ENCODE measurements at regions of chr22 and their contacts with region 1.

Region 1: DNA sequence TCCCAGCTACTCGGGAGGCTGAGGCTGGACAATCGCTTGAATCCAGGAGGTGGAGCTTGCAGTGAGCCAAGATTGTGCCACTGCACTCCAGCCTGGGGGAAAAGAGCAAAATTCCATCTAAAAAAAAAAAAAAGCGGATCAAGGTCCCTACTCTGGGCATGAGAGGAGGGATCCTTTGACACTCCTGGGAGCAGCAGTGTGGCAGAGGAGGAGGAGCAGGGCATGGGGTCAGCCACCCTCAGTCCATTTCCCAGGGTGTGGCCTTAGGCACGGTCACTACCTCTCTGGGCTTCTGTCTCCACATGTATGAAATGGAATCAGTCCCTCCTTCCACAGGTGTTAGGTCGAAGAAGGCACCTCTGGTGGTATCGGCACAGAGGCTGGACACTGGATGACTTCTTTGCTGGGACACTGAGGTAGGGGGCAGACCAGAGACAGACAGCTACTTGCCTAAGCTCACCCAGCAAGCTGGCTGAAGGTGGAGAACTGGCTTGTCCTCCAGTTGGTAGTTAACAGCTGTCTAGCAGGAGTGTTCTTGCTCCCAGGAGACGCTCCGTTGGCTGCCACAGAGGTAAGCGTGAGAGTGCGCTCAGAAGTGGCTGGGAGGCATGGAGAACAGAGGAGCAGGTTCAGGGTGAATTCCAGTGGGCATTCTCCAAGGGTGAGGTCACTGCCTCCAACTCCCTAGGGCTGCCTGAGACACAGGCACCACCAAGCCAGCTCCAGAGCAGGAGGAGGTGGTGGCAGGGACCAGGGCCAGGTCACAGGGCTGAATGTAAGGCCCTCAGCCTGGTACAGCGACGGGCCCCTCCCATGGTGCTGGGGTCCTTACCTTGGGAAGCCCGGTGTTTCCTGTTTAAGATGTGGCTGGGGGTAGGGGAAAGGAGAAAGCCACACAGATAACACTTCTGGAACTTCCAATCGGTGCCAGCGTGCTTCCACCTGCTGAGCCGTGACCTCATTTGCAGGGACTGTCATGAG is 19.5 kb downstream of the TXN2 start:
- DNase-seq: no peak

Region 2: DNA sequence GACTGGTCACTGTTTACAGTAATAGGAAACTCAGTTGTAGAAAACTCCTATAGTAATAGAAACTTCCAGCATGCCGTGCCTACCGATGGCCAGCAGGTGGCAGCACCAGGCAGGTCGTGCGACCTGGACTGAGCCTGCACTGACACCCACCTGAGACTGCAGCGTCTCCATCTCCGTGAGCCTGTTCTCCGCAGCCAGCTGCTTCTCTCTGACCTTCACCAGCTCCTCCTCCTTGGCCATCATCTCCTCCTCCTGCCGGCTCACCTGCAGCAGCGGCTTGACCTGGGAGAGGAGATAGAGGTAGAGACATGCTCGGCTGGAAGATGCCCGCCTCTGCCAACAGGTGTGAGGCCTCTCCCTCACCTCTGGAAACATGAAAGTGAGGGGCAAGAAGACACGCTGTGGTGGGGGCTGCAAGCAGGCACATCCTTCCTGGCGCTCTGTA is 160.6 kb before region 1 on chr22:
- intact Hi-C with region 1: loop called in 1 of 2 experiments (anchors 5 kb)
- DNase-seq: peak; percentile 92

Region 3: DNA sequence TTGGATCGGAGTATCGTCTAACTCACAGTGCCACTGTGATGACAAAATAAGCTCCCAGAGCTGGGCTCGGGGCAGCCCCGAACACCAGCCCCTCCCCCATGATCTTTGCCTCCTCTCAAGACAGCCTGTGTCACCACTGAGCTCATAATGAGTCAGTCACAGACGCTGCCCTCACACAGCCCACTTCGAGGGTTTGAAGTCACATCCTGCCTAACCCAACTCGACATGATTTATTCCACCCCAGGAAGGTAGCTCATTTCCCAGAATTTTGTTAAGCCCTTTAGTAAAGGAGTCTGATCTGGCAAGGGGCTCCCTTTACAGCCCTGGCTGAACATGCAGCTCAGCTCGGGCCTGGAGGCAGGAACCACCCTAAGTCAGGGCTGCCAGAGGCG is 96.9 kb before region 1 on chr22:
- intact Hi-C with region 1: loop called in 1 of 2 experiments (anchors 10 kb)
- DNase-seq: peak; percentile 93

Region 4: GRCh38 chr22:36387752-36388518 is 74.0 kb before region 1 on chr22 and contains the start of gene MYH9:
- intact Hi-C with region 1: loop called (anchors 2 to 5 kb)
- DNase-seq: peak; percentile 100
- total RNA-seq, gene MYH9: 831 to 938 TPM

Region 5: DNA sequence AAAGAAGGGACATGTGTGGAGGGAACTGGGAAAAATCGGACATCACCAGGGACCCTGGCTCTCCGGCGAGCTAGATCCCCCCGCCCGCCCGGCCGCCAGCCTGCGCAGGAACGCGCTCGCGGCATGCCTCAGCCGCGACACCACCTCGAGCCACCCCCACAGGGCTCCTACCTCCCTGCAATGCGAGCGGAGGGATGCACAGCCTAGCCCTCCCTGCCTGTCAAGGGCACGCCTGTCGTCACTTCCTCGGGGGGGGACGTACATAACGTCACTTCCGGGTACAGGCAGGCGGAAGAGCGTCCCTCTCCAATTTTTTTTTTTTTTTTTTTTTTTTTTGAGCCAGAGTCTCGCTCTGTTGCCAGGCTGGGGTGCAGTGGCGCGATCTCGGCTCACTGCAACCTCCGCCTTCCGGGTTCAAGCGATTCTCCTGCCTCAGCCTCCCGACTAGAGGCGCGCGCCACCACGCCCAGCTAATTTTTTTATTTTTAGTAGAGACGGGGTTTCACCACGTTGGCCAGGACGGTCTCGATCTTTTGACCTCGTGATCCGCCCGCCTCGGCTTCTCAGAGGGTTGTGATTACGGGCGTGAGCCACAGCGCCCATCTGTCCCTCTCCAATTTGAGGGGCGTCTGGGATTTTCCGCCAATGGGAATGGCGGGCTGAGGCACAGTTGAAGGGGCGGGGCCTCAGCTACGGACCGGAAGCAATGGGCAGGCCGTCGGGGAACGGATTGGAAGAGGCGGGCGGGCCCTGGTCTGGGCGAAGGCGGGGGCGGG is 19.6 kb after region 1 on chr22 and contains the start of gene TXN2:
- intact Hi-C with region 1: loop called in 1 of 2 experiments (anchors 1 kb)
- DNase-seq: peak; percentile 99
- total RNA-seq, gene TXN2: 38.7 to 50.1 TPM